ENCODE measurements at regions of chr3 and their contacts with region 1.

Region 1: GRCh38 chr3:141000027-141000663 is 51.0 kb upstream of the SPSB4 start:
- DNase-seq: peak; percentile 81
- H3K4me3 Mint-ChIP-seq: no peak overlapping the region
- H3K27ac Mint-ChIP-seq: no peak overlapping the region
- H3K4me1 Mint-ChIP-seq: peaks cover 8% of the 10 kb centered on the region
- H3K27me3 Mint-ChIP-seq: peaks cover 5% of the 10 kb centered on the region
- CTCF ChIP-seq: peak; percentile 67

Region 2: DNA sequence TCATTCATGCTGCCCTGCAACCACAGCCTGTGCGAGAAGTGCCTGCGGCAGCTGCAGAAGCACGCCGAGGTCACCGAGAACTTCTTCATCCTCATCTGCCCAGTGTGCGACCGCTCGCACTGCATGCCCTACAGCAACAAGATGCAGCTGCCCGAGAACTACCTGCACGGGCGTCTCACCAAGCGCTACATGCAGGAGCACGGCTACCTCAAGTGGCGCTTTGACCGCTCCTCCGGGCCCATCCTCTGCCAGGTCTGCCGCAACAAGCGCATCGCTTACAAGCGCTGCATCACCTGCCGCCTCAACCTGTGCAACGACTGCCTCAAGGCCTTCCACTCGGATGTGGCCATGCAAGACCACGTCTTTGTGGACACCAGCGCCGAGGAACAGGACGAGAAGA is 317.6 kb before region 1 on chr3:
- CTCF ChIA-PET with region 1: no interaction called
- intact Hi-C with region 1: no loop called
- DNase-seq: no peak
- H3K4me3 Mint-ChIP-seq: no peak overlapping the region
- H3K27ac Mint-ChIP-seq: no peak overlapping the region
- H3K4me1 Mint-ChIP-seq: no peaks in the 10 kb centered on the region
- H3K27me3 Mint-ChIP-seq: peaks cover 24% of the 10 kb centered on the region
- CTCF ChIP-seq: no peak

Region 3: DNA sequence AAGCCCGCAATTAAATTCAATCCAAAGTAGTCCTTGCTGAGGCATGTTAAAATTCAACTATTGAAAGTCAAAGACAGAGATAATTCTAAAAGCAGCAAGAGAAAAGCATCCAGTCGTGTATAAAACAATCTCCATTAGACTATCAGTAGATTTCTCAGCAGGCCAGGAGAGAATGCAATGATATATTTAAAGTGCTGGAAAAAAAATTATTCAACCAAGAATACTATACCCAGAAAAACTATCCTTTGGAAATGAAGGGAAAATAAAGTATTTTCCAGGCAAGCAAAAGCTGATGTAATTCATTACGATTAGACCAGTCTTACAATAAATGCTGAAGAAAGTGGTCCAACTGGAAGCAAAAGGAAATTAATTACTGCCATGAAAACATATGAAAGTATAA is 208.8 kb before region 1 on chr3:
- CTCF ChIA-PET with region 1: no interaction called
- intact Hi-C with region 1: no loop called
- DNase-seq: no peak
- H3K4me3 Mint-ChIP-seq: no peak overlapping the region
- H3K27ac Mint-ChIP-seq: no peak overlapping the region
- H3K4me1 Mint-ChIP-seq: no peaks in the 10 kb centered on the region
- H3K27me3 Mint-ChIP-seq: no peaks in the 10 kb centered on the region
- CTCF ChIP-seq: no peak

Region 4: DNA sequence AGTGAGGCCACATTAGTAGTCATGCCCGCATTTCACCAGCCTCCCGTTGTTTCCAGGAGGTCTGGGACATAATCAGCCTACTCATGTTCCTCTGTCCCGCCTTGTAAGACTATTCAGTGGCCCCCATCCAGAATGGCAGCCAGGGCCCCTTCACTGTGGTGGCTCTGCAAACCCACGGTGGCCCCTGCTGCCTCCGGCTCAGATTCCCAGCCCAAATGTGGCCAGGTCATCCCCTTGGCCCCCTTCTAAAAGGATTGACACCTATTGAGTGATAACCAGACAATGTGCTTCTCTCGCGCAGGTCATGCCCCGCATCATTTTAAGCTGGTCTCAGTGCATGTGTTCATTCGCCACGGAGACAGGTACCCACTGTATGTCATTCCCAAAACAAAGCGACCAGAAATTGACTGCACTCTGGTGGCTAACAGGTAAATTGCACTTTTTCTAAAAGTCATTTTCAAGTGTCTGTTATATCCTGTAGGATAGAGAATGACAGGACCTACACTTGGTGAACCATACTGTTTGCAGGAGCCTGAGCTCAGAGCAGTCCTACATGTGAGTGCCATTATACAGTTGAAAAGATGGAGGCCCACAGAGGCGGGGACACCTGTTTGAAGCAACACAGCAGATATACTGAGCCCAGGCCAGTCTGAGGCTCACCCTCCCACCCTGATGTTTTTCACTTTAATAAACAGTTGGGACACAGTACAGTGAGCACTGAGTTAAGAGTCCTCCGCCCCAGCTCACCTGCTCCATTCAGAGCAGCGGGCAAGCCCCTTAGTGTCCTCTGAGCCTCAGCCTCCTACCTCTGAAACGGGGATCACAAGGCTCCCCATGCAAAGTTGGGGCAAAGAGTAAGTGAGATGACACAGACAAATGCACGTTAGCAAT is 279.2 kb after region 1 on chr3:
- CTCF ChIA-PET with region 1: no interaction called
- intact Hi-C with region 1: loop called (anchors 2 kb)
- DNase-seq: no peak
- H3K4me3 Mint-ChIP-seq: no peak overlapping the region
- H3K27ac Mint-ChIP-seq: no peak overlapping the region
- H3K4me1 Mint-ChIP-seq: no peaks in the 10 kb centered on the region
- H3K27me3 Mint-ChIP-seq: no peaks in the 10 kb centered on the region
- CTCF ChIP-seq: peak; percentile 73